Esophagus squamous epithelium (tissue), 5 donors: ENCODE measurements at regions of chr11 and their contacts with region 1.

Region 1: GRCh38 chr11:126989942-126990715 is 10.4 kb downstream of the KIRREL3 start:
- DNase-seq: no peak
- H3K4me3 ChIP-seq: no peak overlapping the region
- H3K27ac ChIP-seq: no peak overlapping the region
- H3K4me1 ChIP-seq: peaks cover 0 to 7% (median 0%) of the 10 kb centered on the region in 3 donors
- H3K27me3 ChIP-seq: peaks cover 0 to 34% (median 2%) of the 10 kb centered on the region in 4 donors
- CTCF ChIP-seq: peak in 5 of 6 experiments; percentile 69 to 95 (median 76)
- POLR2A ChIP-seq: no peak

Region 2: DNA sequence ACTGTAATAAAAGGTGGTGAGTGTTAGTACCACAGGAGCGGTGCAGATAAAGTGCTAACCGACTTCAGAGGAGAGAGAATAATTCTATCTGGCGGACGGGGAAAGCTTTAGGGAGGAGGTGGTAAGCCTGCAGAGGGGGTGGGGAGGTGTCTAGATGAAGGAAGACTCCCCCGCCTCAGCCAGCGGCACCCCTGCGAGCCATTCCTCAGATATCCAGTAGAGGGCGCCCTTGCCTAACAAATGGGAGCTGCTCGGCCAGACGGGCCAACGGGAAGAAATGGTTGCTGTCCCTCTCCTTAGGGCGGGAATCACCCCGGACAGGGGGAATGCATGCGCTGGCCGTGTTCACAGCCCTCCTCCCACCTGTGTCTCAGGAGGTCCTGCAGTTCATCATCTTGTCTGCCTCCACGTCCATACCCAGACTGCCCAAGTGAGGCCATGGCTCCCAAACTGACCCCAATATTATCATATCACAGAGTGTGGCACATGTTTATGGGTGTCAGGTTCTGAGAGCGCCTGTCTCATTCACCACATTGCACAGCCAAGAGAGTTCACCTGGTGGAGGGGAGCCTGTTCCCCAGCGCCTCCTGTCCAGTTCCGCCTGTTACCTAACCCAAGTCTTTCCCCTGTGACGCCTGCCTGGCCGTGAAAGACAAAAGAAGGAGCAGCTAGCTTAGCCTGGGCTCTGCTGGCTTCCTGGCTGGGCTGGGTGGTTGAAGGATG is 549.2 kb before region 1 on chr11:
- intact Hi-C with region 1: loop called (anchors 5 kb)
- DNase-seq: no peak
- H3K4me3 ChIP-seq: no peak overlapping the region
- H3K27ac ChIP-seq: no peak overlapping the region
- H3K4me1 ChIP-seq: peaks cover 0 to 13% (median 0%) of the 10 kb centered on the region in 3 donors
- H3K27me3 ChIP-seq: peaks cover 0 to 35% (median 0%) of the 10 kb centered on the region in 4 donors
- CTCF ChIP-seq: peak; percentile 87 to 98 (median 92)
- POLR2A ChIP-seq: no peak

Region 3: DNA sequence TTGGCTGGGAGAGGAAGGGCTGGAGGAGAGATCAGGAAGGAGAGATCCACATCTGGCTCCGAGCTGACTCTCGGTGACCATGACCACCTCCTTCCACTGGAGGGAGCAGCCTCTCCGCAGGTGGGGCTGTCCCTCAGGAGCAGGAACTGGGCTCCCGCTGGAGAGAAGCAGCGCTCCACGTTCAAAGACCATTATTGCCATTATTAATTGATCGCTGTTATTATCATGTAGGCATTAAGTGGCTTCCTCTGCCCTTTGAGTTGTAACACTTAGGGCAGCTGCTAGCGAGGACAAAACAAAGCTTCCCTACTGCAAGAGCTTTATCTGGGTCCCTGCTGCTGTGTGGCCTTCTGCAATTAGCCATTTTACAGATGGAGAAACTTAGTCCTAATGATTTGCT is 382.8 kb before region 1 on chr11:
- intact Hi-C with region 1: loop called (anchors 10 kb)
- DNase-seq: no peak
- H3K4me3 ChIP-seq: no peak overlapping the region
- H3K27ac ChIP-seq: no peak overlapping the region
- H3K4me1 ChIP-seq: no peaks in the 10 kb centered on the region
- H3K27me3 ChIP-seq: peaks cover 0 to 83% (median 0%) of the 10 kb centered on the region in 4 donors
- CTCF ChIP-seq: peak in 5 of 6 experiments; percentile 37 to 77 (median 56)
- POLR2A ChIP-seq: no peak

Region 4: GRCh38 chr11:126655807-126656128 is 334.4 kb before region 1 on chr11:
- intact Hi-C with region 1: no loop called
- DNase-seq: no peak
- H3K4me3 ChIP-seq: no peak overlapping the region
- H3K27ac ChIP-seq: no peak overlapping the region
- H3K4me1 ChIP-seq: peaks cover 0 to 7% (median 4%) of the 10 kb centered on the region in 3 donors
- H3K27me3 ChIP-seq: peaks cover 0 to 20% (median 0%) of the 10 kb centered on the region in 4 donors
- CTCF ChIP-seq: no peak
- POLR2A ChIP-seq: no peak

Region 5: DNA sequence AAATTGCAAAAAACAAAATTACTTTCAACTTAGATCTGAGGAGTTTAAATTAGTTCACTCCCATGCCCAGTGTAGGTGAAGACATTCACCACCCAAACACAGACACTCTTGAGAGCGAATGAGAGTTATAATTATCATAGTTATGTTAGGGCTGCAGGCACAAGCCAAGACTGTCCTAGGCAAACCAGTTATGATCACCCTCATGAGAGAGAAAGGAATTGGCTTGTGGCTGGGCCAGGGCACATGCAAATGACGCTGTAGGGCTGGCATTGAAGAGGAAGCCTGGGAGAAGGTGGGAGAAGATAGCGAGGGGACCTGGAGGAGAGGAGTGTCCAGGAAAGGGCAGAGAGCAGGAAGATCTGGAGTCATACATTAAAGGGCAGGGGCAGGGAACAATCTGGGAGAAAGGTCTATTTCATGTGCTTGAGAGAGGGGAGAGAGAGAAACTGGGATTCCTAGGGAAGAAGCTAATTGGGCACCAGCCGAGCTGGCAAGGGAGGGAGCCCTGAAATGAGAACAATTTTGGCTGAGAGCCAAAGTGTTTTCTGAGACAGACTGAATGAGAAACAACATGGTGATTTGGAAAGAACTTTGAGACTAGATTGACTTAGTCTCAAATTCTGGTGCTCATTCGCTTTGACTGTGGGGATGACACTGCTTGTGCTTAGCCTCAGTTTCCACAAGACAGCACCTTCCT is 269.4 kb before region 1 on chr11:
- intact Hi-C with region 1: loop called (anchors 10 kb)
- DNase-seq: no peak
- H3K4me3 ChIP-seq: no peak overlapping the region
- H3K27ac ChIP-seq: no peak overlapping the region
- H3K4me1 ChIP-seq: no peaks in the 10 kb centered on the region
- H3K27me3 ChIP-seq: peaks cover 0 to 8% (median 0%) of the 10 kb centered on the region in 4 donors
- CTCF ChIP-seq: no peak
- POLR2A ChIP-seq: no peak

Region 6: DNA sequence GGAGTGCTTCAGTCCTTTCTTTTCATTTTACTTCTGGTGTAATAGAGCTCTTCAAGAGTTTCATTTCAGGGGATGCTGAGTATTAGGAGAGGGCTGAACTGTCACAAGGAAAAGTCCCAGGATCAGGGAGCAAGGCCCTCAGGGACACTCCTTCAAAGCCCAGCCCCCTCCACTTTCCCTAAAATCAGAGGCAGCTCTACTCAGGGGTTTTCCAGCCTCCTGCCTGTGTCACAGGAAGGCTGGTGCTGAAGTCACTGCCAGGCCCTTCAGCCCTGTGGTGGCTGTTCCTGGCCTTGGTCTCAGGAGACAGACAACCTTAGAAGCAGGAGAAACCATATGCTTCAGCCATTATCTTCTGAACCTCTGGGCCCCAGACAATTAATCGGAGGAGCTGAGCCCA is 46.9 kb after region 1 on chr11:
- intact Hi-C with region 1: no loop called
- DNase-seq: no peak
- H3K4me3 ChIP-seq: no peak overlapping the region
- H3K27ac ChIP-seq: no peak overlapping the region
- H3K4me1 ChIP-seq: no peaks in the 10 kb centered on the region
- H3K27me3 ChIP-seq: peaks cover 0 to 5% (median 0%) of the 10 kb centered on the region in 4 donors
- CTCF ChIP-seq: no peak
- POLR2A ChIP-seq: no peak

Region 7: GRCh38 chr11:127157225-127157624 is 167.1 kb after region 1 on chr11:
- intact Hi-C with region 1: no loop called
- DNase-seq: no peak
- H3K4me3 ChIP-seq: no peak overlapping the region
- H3K27ac ChIP-seq: no peak overlapping the region
- H3K4me1 ChIP-seq: no peaks in the 10 kb centered on the region
- H3K27me3 ChIP-seq: no peaks in the 10 kb centered on the region
- CTCF ChIP-seq: no peak
- POLR2A ChIP-seq: no peak